HepG2 (cell line): ENCODE measurements at regions of chrX and their contacts with region 1.

Region 1: GRCh38 chrX:71181910-71182799 is 37.5 kb downstream of the NLGN3 start:
- DNase-seq: peak; percentile 95
- ATAC-seq: peak; percentile 82
- H3K4me3 ChIP-seq: peak overlapping the region; percentile 36 to 62 (median 49)
- H3K27ac ChIP-seq: peak overlapping the region; percentile 100
- H3K4me1 ChIP-seq: peaks cover 62% of the 10 kb centered on the region
- H3K27me3 ChIP-seq: no peaks in the 10 kb centered on the region
- CTCF ChIP-seq: no peak
- EP300 ChIP-seq: no peak
- POLR2A ChIP-seq: peak; percentile 68 to 75
- RAD21 ChIP-seq: no peak

Region 2: DNA sequence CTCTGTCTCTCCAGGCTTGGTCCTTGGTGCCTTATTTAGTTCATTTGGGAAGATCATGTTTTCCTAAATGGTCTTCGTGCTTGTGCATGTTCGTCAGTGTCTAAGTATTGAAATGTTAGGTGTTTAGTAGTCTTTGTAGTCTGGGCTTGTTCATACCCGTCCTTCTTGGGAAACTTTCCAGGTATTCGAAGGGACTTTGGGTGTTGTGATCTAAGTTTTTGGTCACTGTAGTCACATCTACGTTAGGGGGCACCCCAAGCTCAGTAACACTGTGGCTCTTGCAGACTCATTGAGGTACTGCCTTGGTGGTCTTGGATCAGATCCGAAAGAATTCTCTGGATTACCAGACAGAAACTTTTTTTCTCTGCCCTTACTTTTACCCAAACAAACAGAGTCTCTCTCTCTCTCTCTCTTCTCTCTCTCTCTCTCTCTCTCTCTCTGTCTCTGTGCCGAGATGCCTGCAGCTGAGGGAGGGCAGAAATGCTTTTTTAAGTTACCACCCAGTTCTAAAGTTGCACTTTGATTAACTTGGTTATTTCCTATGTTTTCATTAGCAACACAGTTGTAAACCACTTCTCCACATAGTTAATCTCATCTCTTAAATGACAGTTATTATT is 183.6 kb before region 1 on chrX:
- CTCF ChIA-PET with region 1: interaction called, 8 read pairs
- POLR2A ChIA-PET with region 1: no interaction called
- in situ Hi-C with region 1: loop called (anchors 10 kb)
- intact Hi-C with region 1: loop called (anchors 1 kb)
- DNase-seq: peak; percentile 37
- ATAC-seq: peak; percentile 55
- H3K4me3 ChIP-seq: no peak overlapping the region
- H3K27ac ChIP-seq: no peak overlapping the region
- H3K4me1 ChIP-seq: no peaks in the 10 kb centered on the region
- H3K27me3 ChIP-seq: no peaks in the 10 kb centered on the region
- CTCF ChIP-seq: peak; percentile 76
- EP300 ChIP-seq: no peak
- POLR2A ChIP-seq: no peak
- RAD21 ChIP-seq: no peak

Region 3: GRCh38 chrX:71128915-71129765 is 53.0 kb before region 1 on chrX:
- CTCF ChIA-PET with region 1: no interaction called
- POLR2A ChIA-PET with region 1: no interaction called
- in situ Hi-C with region 1: no loop called
- intact Hi-C with region 1: no loop called
- DNase-seq: peak; percentile 35
- ATAC-seq: peak; percentile 94
- H3K4me3 ChIP-seq: no peak overlapping the region
- H3K27ac ChIP-seq: no peak overlapping the region
- H3K4me1 ChIP-seq: peaks cover 7% of the 10 kb centered on the region; the same call in 1 of the 2 replicates
- H3K27me3 ChIP-seq: no peaks in the 10 kb centered on the region
- CTCF ChIP-seq: peak; percentile 89
- EP300 ChIP-seq: no peak
- POLR2A ChIP-seq: no peak
- RAD21 ChIP-seq: peak; percentile 59; the same call in 1 of the 2 replicates

Region 4: GRCh38 chrX:71198066-71198465 is 15.9 kb after region 1 on chrX:
- CTCF ChIA-PET with region 1: no interaction called
- POLR2A ChIA-PET with region 1: interaction called, 10 read pairs
- in situ Hi-C with region 1: no loop called
- intact Hi-C with region 1: no loop called
- DNase-seq: no peak
- ATAC-seq: no peak
- H3K4me3 ChIP-seq: no peak overlapping the region
- H3K27ac ChIP-seq: no peak overlapping the region
- H3K4me1 ChIP-seq: peaks cover 39% of the 10 kb centered on the region
- H3K27me3 ChIP-seq: no peaks in the 10 kb centered on the region
- CTCF ChIP-seq: no peak
- EP300 ChIP-seq: no peak
- POLR2A ChIP-seq: no peak
- RAD21 ChIP-seq: no peak

Region 5: DNA sequence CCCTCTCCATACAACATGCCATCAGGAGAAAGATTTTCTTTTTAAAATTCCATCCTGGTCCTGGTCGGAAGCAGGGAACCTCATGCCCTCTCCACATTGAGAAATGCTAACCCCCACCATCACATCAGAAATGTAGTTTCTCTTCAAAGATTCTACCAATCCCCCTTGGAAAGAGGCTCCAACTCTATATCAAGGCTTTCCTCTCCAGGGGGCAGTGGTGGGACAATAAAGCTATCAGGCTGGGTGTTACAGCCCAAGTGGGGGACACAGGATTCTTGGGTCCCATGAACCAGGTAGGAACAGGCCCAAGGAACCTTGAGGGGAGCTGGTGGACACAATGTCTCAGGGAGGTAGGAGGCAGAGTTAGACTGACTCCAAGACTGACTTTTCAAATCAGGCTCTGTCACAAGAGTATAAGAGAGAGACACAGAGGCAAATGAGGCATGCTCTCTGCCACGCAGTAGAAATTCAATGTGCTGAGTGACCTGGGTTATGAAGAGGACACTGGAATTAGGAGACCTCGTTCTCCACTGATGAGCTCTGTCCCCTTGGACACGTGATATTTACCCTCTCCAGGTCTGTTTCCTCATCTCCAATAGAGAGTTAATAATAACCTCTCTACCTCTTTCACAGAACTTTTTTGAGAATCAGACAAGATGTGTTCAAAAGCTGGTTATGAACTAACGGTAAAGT is 45.4 kb after region 1 on chrX:
- CTCF ChIA-PET with region 1: no interaction called
- POLR2A ChIA-PET with region 1: interaction called, 61 read pairs
- in situ Hi-C with region 1: no loop called
- intact Hi-C with region 1: no loop called
- DNase-seq: peak; percentile 76
- ATAC-seq: peak; percentile 68
- H3K4me3 ChIP-seq: peak overlapping the region in 2 of 3 experiments; percentile 19 to 50; a peak in 3 of 6 replicates
- H3K27ac ChIP-seq: peak overlapping the region; percentile 100
- H3K4me1 ChIP-seq: peaks cover 92% of the 10 kb centered on the region
- H3K27me3 ChIP-seq: no peaks in the 10 kb centered on the region
- CTCF ChIP-seq: peak; percentile 39
- EP300 ChIP-seq: no peak
- POLR2A ChIP-seq: peak; percentile 58 to 64; a peak in 3 of 4 replicates
- RAD21 ChIP-seq: no peak

Region 6: GRCh38 chrX:71283403-71284143 is 101.4 kb after region 1 on chrX and contains the start of gene NONO:
- CTCF ChIA-PET with region 1: no interaction called
- POLR2A ChIA-PET with region 1: interaction called, 54 read pairs
- in situ Hi-C with region 1: no loop called
- intact Hi-C with region 1: loop called (anchors 1 kb)
- DNase-seq: peak; percentile 97
- ATAC-seq: peak; percentile 94
- H3K4me3 ChIP-seq: peak within 1 kb of the TSS; percentile 66 to 81 (median 68)
- H3K27ac ChIP-seq: peak within 1 kb of the TSS; percentile 91
- H3K4me1 ChIP-seq: peaks cover 21% of the 10 kb centered on the region
- H3K27me3 ChIP-seq: no peaks in the 10 kb centered on the region
- CTCF ChIP-seq: peak; percentile 30; the same call in 1 of the 2 replicates
- EP300 ChIP-seq: no peak
- POLR2A ChIP-seq: peak; percentile 62 to 64
- RAD21 ChIP-seq: no peak
- total RNA-seq, gene NONO: 387 and 408 TPM in 2 replicates